BJ (cell line): ENCODE measurements at regions of chr22 and their contacts with region 1.

Region 1: GRCh38 chr22:20927940-20928572 is 10.8 kb downstream of the CRKL start:
- DNase-seq: no peak
- H3K4me3 ChIP-seq: no peak overlapping the region
- H3K27me3 ChIP-seq: no peaks in the 10 kb centered on the region
- CTCF ChIP-seq: no peak

Region 2: GRCh38 chr22:20852076-20852475 is 76.0 kb before region 1 on chr22:
- CTCF ChIA-PET with region 1: no interaction called
- POLR2A ChIA-PET with region 1: no interaction called
- DNase-seq: no peak
- H3K4me3 ChIP-seq: no peak overlapping the region
- H3K27me3 ChIP-seq: no peaks in the 10 kb centered on the region
- CTCF ChIP-seq: no peak

Region 3: DNA sequence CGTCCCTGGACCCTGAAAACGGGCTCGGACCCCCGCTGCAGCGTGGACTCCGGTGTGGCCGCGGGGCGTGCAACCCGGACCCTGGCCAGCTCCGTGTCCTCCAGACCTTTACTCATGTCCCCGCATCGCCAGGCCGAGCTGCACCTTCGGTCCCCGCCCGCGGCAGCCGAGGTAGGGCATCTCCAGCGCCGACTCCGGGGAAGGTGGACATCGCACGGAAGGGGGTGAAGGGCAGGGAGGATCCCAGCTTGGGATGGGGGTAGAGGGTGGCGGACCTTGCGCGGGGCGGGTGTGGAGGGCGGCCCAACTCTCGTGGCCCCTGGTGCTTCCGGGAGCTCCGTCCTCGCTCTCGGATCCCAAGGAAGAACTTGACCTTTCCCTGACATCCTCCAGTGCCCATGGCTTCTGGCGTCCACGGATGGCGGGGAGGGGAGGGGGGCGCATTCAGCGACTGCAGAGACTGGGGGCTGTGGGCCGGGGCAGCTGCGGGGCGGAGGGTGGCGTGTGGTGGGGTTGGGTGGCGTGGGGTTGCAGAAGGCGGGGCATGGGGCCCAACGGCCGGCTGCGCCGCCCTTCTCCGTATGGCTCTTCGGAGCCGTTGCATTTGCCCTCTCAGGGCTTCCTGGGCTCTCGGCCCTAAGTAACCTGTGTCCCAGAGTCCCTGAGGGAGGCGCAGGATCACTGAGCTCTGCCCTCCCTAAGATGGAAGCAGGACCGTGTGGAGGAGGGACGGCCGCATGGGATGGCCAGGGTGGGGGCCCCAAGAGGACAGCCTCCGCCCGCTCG is 29.5 kb after region 1 on chr22:
- CTCF ChIA-PET with region 1: no interaction called
- POLR2A ChIA-PET with region 1: interaction called, 10 read pairs
- DNase-seq: no peak
- H3K4me3 ChIP-seq: peak overlapping the region; percentile 63
- H3K27me3 ChIP-seq: no peaks in the 10 kb centered on the region
- CTCF ChIP-seq: 0 out of 2 replicates have a peak, but pooled peaks have one; percentile 3